ENCODE measurements at regions of chr6 and their contacts with region 1.

Region 1: GRCh38 chr6:43769526-43770416 is at the start of gene VEGFA:
- DNase-seq: peak; percentile 91 to 97 (median 96)
- ATAC-seq: peak; percentile 83 to 84
- H3K4me3 ChIP-seq: peak within 1 kb of the TSS; percentile 64
- H3K27ac ChIP-seq: peak within 1 kb of the TSS; percentile 95
- H3K4me1 ChIP-seq: peaks cover 5% of the 10 kb centered on the region
- H3K27me3 ChIP-seq: no peaks in the 10 kb centered on the region
- total RNA-seq, gene VEGFA: 163 to 296 (median 219) TPM

Region 2: DNA sequence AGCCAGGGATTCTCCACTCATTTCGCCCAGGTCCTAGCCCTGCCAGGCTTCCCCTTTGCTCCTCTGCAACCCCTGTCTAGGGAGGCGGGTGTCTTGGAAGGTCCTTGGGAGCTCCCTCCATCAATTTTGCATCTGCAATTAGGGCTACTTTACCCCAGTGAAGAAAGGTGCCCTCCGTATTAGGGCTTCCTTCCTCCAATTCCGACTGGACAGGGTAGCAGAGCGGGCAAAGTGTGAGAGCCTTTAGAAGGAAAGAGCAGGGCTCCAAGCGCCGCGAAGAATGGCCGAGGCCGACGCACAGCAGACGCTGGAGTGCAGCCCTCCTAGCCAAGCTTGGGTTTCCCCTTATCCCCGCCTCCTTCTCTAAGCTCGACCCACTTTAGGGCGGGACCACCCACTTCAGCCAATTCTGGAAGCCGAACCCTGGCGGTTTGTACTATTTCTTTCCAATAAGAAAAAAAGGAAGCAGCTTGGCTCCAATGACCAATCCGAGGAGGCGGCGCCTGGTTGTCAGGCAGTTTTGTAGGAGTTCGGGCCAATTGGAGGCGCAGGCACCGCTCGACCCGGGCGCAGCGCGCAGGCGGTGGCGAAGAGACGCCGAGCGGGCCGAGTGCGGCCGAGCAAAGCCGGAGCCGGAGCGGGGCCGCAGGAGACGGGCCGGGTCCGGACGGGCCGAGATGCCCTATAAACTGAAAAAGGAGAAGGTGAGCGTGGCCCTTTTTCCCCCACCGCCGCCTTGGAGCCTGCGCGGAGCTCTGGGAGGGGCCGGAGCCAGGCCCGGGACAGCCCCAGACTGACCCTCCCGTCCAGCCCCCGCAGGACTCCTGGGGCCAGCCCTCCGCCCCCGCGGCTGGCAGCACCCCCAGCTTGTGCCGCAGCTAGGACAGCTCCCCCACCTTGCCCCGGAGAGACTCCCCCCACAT is 785.5 kb before region 1 on chr6 and contains the start of gene PPP2R5D:
- intact Hi-C with region 1: no loop called
- DNase-seq: peak; percentile 98 to 99 (median 98)
- ATAC-seq: peak; percentile 97
- H3K4me3 ChIP-seq: peak within 1 kb of the TSS; percentile 90
- H3K27ac ChIP-seq: peak within 1 kb of the TSS; percentile 95
- H3K4me1 ChIP-seq: peaks cover 23% of the 10 kb centered on the region
- H3K27me3 ChIP-seq: no peaks in the 10 kb centered on the region
- total RNA-seq, gene PPP2R5D: 32.1 to 39.3 (median 37.6) TPM

Region 3: DNA sequence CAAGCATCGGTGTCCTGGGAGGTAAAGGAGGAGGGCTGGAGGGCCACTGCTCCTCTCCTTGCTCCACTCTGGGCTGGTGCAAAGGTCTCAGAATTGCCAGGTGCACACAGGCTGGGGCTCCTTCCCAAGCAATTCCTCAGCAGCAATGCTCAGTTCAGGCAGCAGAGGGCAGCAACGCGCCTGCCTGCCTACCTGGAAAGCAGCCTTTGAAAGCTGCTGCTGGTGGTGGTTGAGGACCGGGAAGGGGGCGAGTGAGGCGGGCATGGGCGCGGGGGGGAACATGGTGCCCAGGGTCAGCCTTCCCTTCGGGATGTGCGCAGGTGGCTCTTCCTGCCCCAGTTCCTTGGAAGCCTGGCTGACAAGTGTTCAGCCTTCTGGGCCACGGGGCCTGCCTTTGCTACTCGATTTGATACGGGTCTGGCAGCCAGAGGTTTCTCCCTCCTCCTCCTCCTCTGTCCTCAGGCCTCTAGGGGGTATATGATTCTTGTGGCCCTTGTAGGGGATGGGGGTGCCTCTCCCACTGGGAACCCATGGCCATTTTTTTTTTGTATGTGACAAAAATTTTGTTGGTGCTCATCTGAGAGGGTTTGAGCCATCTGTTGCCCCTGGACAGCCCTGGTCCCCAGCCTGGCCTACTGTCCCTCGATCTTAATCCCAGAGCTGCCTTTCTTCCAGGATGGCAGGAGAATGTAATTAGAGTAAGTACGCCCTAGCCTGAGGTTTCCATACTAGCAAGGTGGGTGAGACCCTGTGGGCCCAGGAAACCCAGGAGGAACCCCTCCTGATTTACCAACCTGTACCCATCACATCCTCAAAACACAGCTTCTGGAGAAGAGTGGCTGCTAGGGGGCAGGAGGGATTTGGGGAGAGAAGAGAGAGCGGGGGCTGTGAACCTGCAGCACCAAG is 102.3 kb before region 1 on chr6:
- intact Hi-C with region 1: loop called (anchors 5 kb)
- DNase-seq: peak; percentile 76 to 93 (median 92)
- ATAC-seq: peak; percentile 33 to 56
- H3K4me3 ChIP-seq: no peak overlapping the region
- H3K27ac ChIP-seq: peak overlapping the region; percentile 61
- H3K4me1 ChIP-seq: peaks cover 21% of the 10 kb centered on the region
- H3K27me3 ChIP-seq: no peaks in the 10 kb centered on the region

Region 4: GRCh38 chr6:43838276-43839036 is 68.7 kb after region 1 on chr6:
- intact Hi-C with region 1: loop called in 1 of 4 experiments (anchors 5 kb)
- DNase-seq: peak; percentile 70 to 84 (median 77)
- ATAC-seq: peak; percentile 69 to 83
- H3K4me3 ChIP-seq: no peak overlapping the region
- H3K27ac ChIP-seq: no peak overlapping the region
- H3K4me1 ChIP-seq: no peaks in the 10 kb centered on the region
- H3K27me3 ChIP-seq: no peaks in the 10 kb centered on the region

Region 5: GRCh38 chr6:43951063-43951755 is 181.4 kb after region 1 on chr6:
- intact Hi-C with region 1: loop called in 3 of 4 experiments (anchors 5 kb)
- DNase-seq: peak; percentile 57 to 86 (median 83)
- ATAC-seq: peak; percentile 61 to 66
- H3K4me3 ChIP-seq: no peak overlapping the region
- H3K27ac ChIP-seq: peak overlapping the region; percentile 1
- H3K4me1 ChIP-seq: peaks cover 2% of the 10 kb centered on the region
- H3K27me3 ChIP-seq: no peaks in the 10 kb centered on the region

Region 6: GRCh38 chr6:44002593-44003344 is 233.0 kb after region 1 on chr6:
- intact Hi-C with region 1: loop called in 1 of 4 experiments (anchors 5 kb)
- DNase-seq: peak; percentile 53 to 85 (median 76)
- ATAC-seq: peak; percentile 15 to 47
- H3K4me3 ChIP-seq: peak overlapping the region; percentile 21
- H3K27ac ChIP-seq: peak overlapping the region; percentile 91
- H3K4me1 ChIP-seq: no peaks in the 10 kb centered on the region
- H3K27me3 ChIP-seq: no peaks in the 10 kb centered on the region

Region 7: DNA sequence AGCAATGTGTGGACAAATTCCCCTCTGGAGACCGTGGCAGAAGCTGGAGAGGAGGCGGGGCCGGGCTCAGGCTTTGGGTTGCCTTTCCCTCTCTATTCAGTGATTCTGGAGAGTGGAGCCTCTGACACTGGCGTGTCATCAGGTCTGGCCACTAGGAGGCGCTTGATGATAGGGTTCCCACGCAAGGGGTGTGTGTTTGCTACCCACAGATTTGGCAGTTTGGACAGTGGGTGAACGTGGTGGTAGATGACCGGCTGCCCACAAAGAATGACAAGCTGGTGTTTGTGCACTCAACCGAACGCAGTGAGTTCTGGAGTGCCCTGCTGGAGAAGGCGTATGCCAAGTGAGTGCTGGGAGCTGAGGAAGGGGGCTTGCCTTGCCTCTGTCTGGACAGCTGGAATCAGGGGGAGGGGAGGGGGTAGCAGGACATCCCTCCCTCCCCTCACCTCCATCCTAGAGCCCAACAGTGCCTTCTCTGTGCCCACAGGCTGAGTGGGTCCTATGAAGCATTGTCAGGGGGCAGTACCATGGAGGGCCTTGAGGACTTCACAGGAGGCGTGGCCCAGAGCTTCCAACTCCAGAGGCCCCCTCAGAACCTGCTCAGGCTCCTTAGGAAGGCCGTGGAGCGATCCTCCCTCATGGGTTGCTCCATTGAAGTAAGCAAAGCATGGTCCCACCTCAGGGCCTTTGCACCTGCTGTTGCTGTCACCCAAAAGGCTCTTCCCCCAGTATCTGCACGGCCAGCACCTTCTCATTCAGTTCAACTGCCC is 403.1 kb after region 1 on chr6:
- intact Hi-C with region 1: no loop called
- DNase-seq: peak; percentile 88 to 96 (median 94)
- ATAC-seq: peak; percentile 90 to 92
- H3K4me3 ChIP-seq: no peak overlapping the region
- H3K27ac ChIP-seq: no peak overlapping the region
- H3K4me1 ChIP-seq: peaks cover 7% of the 10 kb centered on the region
- H3K27me3 ChIP-seq: no peaks in the 10 kb centered on the region